ENCODE measurements at regions of chrX and their contacts with region 1.

Region 1: GRCh38 chrX:130176354-130176776 is 4.6 kb downstream of the RAB33A start:
- DNase-seq: peak; percentile 39
- H3K4me3 ChIP-seq: no peak overlapping the region
- H3K27ac ChIP-seq: no peak overlapping the region
- H3K4me1 ChIP-seq: peaks cover 0 to 5% (median 2%) of the 10 kb centered on the region in 4 donors
- H3K27me3 ChIP-seq: peaks cover 8% of the 10 kb centered on the region
- CTCF ChIP-seq: no peak
- EP300 ChIP-seq: no peak
- POLR2A ChIP-seq: no peak

Region 2: DNA sequence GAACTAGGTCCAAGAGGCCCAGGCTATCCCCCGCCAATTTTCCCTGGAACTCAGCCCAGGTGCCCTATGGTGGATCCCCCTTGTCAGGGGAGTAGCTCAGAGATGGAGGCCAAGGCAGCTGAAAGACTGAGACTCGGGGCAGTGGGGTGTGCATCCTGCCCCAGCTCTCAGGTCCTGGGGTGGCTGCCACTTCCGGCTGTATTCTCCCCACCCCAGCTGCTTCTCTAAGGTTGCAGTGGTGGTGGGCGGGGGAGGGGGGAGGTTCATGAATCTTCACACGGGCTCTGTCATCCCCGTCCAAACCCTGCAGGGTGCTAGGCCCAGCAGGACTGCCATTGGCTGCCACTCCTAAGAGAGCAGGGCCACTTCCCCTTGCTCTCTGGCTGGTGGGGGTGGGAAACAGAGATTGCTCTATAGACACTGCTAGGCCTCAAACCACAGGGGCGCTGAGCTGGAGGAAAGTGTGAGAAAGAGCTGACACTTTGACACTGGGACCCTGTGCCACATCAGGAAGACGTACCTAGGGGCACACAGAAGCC is 395.2 kb before region 1 on chrX:
- in situ Hi-C with region 1: no loop called
- intact Hi-C with region 1: no loop called
- DNase-seq: peak; percentile 67
- H3K4me3 ChIP-seq: peak overlapping the region in 2 of 4 donors; percentile 6 to 42
- H3K27ac ChIP-seq: peak overlapping the region; percentile 51 to 79 (median 61)
- H3K4me1 ChIP-seq: no peaks in the 10 kb centered on the region
- H3K27me3 ChIP-seq: no peaks in the 10 kb centered on the region
- CTCF ChIP-seq: no peak
- EP300 ChIP-seq: no peak
- POLR2A ChIP-seq: peak; percentile 22

Region 3: DNA sequence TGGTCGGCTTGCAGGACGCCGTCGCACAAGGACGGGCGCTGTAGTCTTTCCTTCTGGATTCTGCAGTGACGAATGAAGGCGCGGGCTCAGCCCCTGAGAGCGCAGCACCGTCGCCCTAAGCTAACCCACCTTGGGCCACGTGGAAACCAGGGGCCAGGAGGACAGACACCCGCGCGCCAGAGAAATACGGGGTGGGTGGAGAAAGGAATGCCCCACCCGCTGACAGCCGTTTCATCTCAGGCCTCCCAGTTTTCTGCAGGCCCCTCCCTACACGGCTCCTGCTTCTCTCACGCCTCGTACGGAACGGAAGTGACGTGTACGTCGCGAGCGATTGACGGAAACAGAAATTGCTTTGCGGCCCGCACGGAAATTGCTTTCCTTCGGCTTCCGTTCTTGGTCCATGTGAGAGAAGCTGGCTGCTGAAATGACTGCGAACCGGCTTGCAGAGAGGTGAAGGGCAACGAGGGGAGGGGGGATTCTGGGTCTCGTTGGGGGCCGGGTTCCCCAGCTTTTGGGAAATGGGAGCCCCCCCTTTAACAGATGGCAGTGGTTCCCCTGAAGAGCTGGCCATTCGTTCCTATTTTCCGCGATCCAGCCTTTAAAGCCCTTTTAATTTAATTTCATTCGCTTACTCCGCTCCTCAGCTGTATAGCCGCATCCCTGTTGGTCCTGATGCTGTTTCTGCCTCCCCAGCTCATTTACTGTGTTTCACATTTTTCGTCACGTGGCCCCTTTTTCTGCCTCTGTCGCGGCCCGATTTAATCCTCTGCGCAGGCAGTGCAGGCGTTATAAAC is 270.4 kb before region 1 on chrX and contains the start of gene UTP14A:
- in situ Hi-C with region 1: loop called in 1 of 4 experiments (anchors 25 kb)
- intact Hi-C with region 1: no loop called
- DNase-seq: peak; percentile 90
- H3K4me3 ChIP-seq: peak within 1 kb of the TSS; percentile 47 to 75 (median 62)
- H3K27ac ChIP-seq: peak within 1 kb of the TSS; percentile 73 to 88 (median 80)
- H3K4me1 ChIP-seq: peaks cover 0 to 8% (median 3%) of the 10 kb centered on the region in 4 donors
- H3K27me3 ChIP-seq: no peaks in the 10 kb centered on the region
- CTCF ChIP-seq: no peak
- EP300 ChIP-seq: no peak
- POLR2A ChIP-seq: peak; percentile 36
- total RNA-seq, gene UTP14A: 7.2 to 14.7 (median 11.4) TPM

Region 4: DNA sequence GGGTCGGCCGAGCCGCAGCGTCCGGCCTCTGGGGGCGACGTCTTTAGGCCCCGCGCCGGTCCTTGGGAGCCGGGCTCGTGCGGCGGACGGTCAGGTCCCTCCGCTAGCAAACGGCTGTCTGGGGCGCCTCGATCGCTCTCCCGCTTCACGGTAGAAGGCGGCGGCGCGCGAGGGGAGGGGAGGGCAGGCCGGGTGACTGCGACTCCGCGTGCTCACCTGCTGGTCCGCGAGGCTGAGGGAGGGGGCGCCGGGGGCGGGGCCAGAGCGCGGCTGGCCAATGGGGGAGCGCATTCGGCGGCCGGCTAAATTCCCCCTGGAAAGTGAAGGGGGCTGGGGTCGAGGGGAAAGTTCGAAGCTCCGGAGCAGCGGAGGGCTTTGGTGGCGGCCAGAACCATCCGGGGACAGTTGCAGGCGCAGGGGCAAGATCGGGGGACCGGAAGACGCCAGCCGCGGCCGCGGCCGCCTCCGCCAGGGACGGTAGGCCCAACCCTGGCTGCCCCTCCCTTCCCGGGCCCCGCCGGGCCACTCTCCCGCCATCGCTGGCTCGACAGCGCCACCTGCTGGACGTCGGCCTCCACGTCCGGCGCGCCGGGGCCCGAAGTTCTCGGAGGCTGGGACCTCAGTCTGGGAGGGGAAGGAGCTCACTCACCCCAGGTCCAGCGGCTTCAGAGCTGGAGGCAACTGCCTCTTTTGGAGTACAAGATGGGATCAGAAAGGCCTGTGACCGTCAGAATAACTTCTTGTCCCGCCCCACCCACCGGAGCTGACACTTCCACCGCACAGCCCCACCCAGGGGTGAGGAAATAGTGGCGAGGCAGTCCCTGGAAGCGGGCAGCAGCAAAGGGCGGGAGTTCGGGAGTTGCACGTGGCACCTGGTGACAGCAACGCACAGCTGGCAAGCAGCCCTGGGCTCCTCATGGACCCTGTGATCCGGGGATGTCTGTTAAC is 116.0 kb before region 1 on chrX:
- in situ Hi-C with region 1: loop called in 1 of 4 experiments (anchors 25 kb)
- intact Hi-C with region 1: no loop called
- DNase-seq: peak; percentile 86
- H3K4me3 ChIP-seq: peak overlapping the region; percentile 30 to 68 (median 42)
- H3K27ac ChIP-seq: peak overlapping the region; percentile 62 to 86 (median 82)
- H3K4me1 ChIP-seq: peaks cover 0 to 11% (median 4%) of the 10 kb centered on the region in 4 donors
- H3K27me3 ChIP-seq: no peaks in the 10 kb centered on the region
- CTCF ChIP-seq: peak; percentile 77 to 95 (median 86)
- EP300 ChIP-seq: no peak
- POLR2A ChIP-seq: peak; percentile 21

Region 5: GRCh38 chrX:130079824-130080406 is 96.5 kb before region 1 on chrX:
- in situ Hi-C with region 1: loop called in 1 of 4 experiments (anchors 25 kb)
- intact Hi-C with region 1: no loop called
- DNase-seq: peak; percentile 67
- H3K4me3 ChIP-seq: no peak overlapping the region
- H3K27ac ChIP-seq: no peak overlapping the region
- H3K4me1 ChIP-seq: peaks cover under 1 to 16% (median 5%) of the 10 kb centered on the region in 4 donors
- H3K27me3 ChIP-seq: no peaks in the 10 kb centered on the region
- CTCF ChIP-seq: peak; percentile 59 to 71 (median 63)
- EP300 ChIP-seq: no peak
- POLR2A ChIP-seq: no peak

Region 6: DNA sequence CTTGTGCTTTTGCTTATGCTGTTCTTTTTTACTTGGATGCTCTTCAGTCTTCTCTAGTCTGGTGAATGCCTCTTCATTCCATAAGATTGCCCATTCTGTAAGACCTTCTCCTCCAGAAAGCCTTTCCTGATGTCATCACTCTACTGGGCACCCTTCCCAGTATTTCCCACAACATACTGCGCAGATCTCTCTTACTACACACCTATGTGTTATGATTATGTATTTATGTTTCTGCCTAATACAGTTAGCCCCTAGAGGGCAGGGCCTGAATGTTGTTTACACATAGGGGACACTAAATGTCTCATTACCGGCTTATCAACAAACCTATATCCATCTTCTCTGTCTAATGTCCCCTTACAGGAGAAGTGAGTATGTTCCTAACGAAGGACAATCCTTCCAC is 31.9 kb before region 1 on chrX:
- in situ Hi-C with region 1: no loop called
- intact Hi-C with region 1: no loop called
- DNase-seq: no peak
- H3K4me3 ChIP-seq: no peak overlapping the region
- H3K27ac ChIP-seq: no peak overlapping the region
- H3K4me1 ChIP-seq: no peaks in the 10 kb centered on the region
- H3K27me3 ChIP-seq: no peaks in the 10 kb centered on the region
- CTCF ChIP-seq: no peak
- EP300 ChIP-seq: no peak
- POLR2A ChIP-seq: no peak

Region 7: GRCh38 chrX:130228871-130229270 is 52.5 kb after region 1 on chrX:
- in situ Hi-C with region 1: no loop called
- intact Hi-C with region 1: no loop called
- DNase-seq: no peak
- H3K4me3 ChIP-seq: no peak overlapping the region
- H3K27ac ChIP-seq: no peak overlapping the region
- H3K4me1 ChIP-seq: no peaks in the 10 kb centered on the region
- H3K27me3 ChIP-seq: no peaks in the 10 kb centered on the region
- CTCF ChIP-seq: no peak
- EP300 ChIP-seq: no peak
- POLR2A ChIP-seq: no peak